Activated T-helper 2 cell treated with anti-CD3 and anti-CD28 coated beads, Interferon-gamma antibody, Interleukin-2, Interleukin-4, amounts not matched to agents 10 μg/mL and 5 μg/mL and 100 μg/mL, durations not matched to agents 14 hours and 24 hours and 36 hours (primary cell): ENCODE measurements at regions of chr3 and their contacts with region 1.

Region 1: DNA sequence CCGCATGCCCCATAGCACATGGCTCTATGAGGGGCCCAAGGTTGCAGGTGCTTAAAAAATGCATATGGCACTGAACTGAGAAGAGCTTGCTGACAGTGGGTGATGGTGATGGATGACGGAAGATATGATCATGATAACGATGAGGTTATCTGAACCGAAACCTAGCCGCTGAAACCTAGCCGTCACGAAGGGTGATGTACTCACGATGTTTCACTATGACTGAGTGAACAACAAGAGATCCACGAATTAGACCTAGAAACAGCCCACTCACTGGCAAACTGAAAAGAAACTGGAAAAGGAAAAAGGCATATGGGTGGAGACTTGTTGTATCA is 57.6 kb upstream of the BCL6 start:
- DNase-seq: peak; percentile 80
- H3K4me3 Mint-ChIP-seq: peak overlapping the region; percentile 54
- H3K27ac Mint-ChIP-seq: peak overlapping the region; percentile 87
- H3K4me1 Mint-ChIP-seq: peaks cover 90% of the 10 kb centered on the region
- H3K27me3 Mint-ChIP-seq: no peaks in the 10 kb centered on the region

Region 2: DNA sequence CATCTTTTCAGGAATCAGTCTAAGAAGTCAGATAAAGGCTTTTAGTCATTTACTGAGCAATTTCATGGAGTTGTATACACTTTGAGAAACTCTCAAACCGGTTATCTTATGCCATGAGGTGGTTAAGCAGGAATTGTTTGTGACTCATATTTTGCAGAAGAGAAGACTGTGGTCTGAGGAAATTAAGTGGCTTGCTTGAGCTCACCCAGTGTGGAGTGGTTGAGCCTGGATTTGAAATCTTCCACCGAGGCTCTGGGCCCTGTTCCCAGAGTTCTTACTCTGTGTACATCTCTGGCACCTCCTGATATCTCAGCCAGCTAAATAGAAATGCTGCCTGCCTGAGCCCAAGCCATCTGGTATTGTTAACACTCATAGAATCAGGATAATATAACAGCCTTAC is 19.8 kb before region 1 on chr3:
- intact Hi-C with region 1: loop called (anchors 1 kb)
- DNase-seq: no peak
- H3K4me3 Mint-ChIP-seq: no peak overlapping the region
- H3K27ac Mint-ChIP-seq: peak overlapping the region; percentile 68
- H3K4me1 Mint-ChIP-seq: peaks cover 36% of the 10 kb centered on the region
- H3K27me3 Mint-ChIP-seq: no peaks in the 10 kb centered on the region

Region 3: GRCh38 chr3:187986514-187986934 is 183.6 kb after region 1 on chr3:
- intact Hi-C with region 1: loop called (anchors 1 kb)
- DNase-seq: peak; percentile 35
- H3K4me3 Mint-ChIP-seq: peak overlapping the region; percentile 22
- H3K27ac Mint-ChIP-seq: peak overlapping the region; percentile 65
- H3K4me1 Mint-ChIP-seq: peaks cover 51% of the 10 kb centered on the region
- H3K27me3 Mint-ChIP-seq: no peaks in the 10 kb centered on the region

Region 4: DNA sequence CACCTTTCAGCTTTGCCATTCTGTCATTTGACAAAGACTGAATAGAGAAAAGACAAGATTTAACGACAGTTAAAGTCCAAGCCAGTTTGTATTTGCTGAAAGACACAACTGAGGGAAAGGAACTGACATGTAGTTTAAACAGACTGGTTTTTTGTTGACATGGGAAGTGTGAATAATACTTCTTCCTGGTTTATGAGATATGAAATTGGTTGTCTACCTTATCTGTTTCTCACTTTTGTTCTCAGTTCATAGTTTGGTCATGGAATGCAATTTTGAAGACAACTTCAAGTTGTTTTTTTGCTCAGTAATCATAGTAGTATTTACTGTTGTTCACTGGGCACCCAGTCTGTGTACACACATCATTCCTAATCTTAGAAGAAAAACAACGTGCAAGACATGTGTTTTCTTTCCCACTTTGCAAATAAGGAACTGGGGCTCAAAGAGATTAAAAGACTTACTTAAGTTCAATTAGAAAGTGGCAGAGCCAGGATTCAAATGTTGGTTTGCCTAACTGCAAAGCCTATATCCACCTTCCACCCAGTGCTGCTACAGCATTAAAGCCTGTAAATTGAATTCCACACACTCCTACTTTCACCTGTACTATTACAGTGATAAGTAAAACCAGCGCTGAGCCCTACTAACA is 454.6 kb after region 1 on chr3:
- intact Hi-C with region 1: loop called (anchors 1 kb)
- DNase-seq: no peak
- H3K4me3 Mint-ChIP-seq: no peak overlapping the region
- H3K27ac Mint-ChIP-seq: peak overlapping the region; percentile 70
- H3K4me1 Mint-ChIP-seq: peaks cover 57% of the 10 kb centered on the region
- H3K27me3 Mint-ChIP-seq: no peaks in the 10 kb centered on the region

Region 5: GRCh38 chr3:188339410-188340295 is 536.8 kb after region 1 on chr3:
- intact Hi-C with region 1: loop called (anchors 1 kb)
- DNase-seq: peak; percentile 19
- H3K4me3 Mint-ChIP-seq: peak overlapping the region; percentile 66
- H3K27ac Mint-ChIP-seq: peak overlapping the region; percentile 89
- H3K4me1 Mint-ChIP-seq: peaks cover 29% of the 10 kb centered on the region
- H3K27me3 Mint-ChIP-seq: no peaks in the 10 kb centered on the region

Region 6: GRCh38 chr3:188947401-188948280 is 1144.7 kb after region 1 on chr3:
- intact Hi-C with region 1: loop called (anchors 1 kb)
- DNase-seq: no peak
- H3K4me3 Mint-ChIP-seq: no peak overlapping the region
- H3K27ac Mint-ChIP-seq: no peak overlapping the region
- H3K4me1 Mint-ChIP-seq: peaks cover 39% of the 10 kb centered on the region
- H3K27me3 Mint-ChIP-seq: peaks cover 18% of the 10 kb centered on the region